A673 (cell line): ENCODE measurements at regions of chr13 and their contacts with region 1.

Region 1: GRCh38 chr13:50306126-50306525 is 290.9 kb downstream of the KCNRG start:
- DNase-seq: no peak
- H3K4me3 ChIP-seq: no peak overlapping the region
- H3K27ac ChIP-seq: no peak overlapping the region
- H3K4me1 ChIP-seq: no peaks in the 10 kb centered on the region
- H3K27me3 ChIP-seq: no peaks in the 10 kb centered on the region
- CTCF ChIP-seq: no peak

Region 2: GRCh38 chr13:50106559-50106958 is 199.6 kb before region 1 on chr13:
- CTCF ChIA-PET with region 1: no interaction called
- POLR2A ChIA-PET with region 1: no interaction called
- intact Hi-C with region 1: no loop called
- DNase-seq: no peak
- H3K4me3 ChIP-seq: no peak overlapping the region
- H3K27ac ChIP-seq: peak overlapping the region; percentile 10
- H3K4me1 ChIP-seq: peaks cover 27% of the 10 kb centered on the region
- H3K27me3 ChIP-seq: no peaks in the 10 kb centered on the region
- CTCF ChIP-seq: no peak

Region 3: GRCh38 chr13:50831512-50831911 is 525.4 kb after region 1 on chr13:
- CTCF ChIA-PET with region 1: no interaction called
- POLR2A ChIA-PET with region 1: interaction called, 12 read pairs
- intact Hi-C with region 1: no loop called
- DNase-seq: no peak
- H3K4me3 ChIP-seq: no peak overlapping the region
- H3K27ac ChIP-seq: no peak overlapping the region
- H3K4me1 ChIP-seq: no peaks in the 10 kb centered on the region
- H3K27me3 ChIP-seq: no peaks in the 10 kb centered on the region
- CTCF ChIP-seq: no peak